PC-9 (cell line): ENCODE measurements at regions of chr4 and their contacts with region 1.

Region 1: DNA sequence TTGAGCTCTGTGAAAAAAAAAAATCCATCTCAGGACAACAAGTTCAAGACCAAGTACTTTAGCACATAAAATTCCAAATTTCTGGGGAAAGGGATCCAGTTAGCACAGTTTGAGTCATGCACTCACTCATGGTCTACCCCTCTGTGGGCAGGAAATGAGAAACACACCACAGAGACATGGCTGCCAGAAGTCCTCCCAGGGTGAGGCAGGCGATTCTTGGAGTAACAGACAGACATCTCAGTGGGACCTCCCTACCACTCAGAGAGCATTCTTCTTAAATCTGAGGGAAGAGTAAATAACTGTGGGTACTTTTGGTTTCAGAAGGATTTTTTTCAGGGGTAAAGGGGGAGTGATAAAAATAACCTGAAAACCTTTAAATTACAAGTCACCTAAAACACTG is 14.1 kb downstream of the CXCL1 start:
- DNase-seq: no peak
- H3K4me3 ChIP-seq: no peak overlapping the region
- H3K27ac ChIP-seq: no peak overlapping the region
- H3K4me1 ChIP-seq: no peaks in the 10 kb centered on the region
- H3K27me3 ChIP-seq: no peaks in the 10 kb centered on the region
- CTCF ChIP-seq: no peak

Region 2: GRCh38 chr4:73687394-73687793 is 195.9 kb before region 1 on chr4:
- CTCF ChIA-PET with region 1: interaction called, 13 read pairs
- POLR2A ChIA-PET with region 1: no interaction called
- intact Hi-C with region 1: no loop called
- DNase-seq: no peak
- H3K4me3 ChIP-seq: no peak overlapping the region
- H3K27ac ChIP-seq: no peak overlapping the region
- H3K4me1 ChIP-seq: no peaks in the 10 kb centered on the region; the same call in 1 of the 2 replicates
- H3K27me3 ChIP-seq: no peaks in the 10 kb centered on the region
- CTCF ChIP-seq: no peak

Region 3: DNA sequence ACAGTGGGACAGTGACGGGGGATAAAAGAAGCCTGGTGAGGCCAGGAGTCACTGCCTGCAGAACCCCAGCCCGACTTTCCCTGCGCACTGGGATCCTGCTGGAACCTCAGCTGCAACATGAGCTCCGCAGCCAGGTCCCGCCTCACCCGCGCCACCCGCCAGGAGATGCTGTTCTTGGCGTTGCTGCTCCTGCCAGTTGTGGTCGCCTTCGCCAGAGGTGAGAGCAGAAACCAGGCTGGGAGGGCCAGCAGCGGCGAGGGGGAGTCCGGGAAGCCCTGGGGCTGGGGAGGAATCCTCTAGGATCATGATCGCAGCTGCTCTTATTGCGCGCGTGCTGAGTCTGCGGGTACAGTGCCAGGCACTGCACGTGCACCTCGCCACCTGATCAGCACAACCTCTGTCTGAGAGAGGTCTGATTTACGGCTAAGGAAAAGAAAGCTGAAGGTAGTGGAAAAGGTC is 30.0 kb before region 1 on chr4 and contains the start of gene PF4V1:
- CTCF ChIA-PET with region 1: no interaction called
- POLR2A ChIA-PET with region 1: no interaction called
- intact Hi-C with region 1: no loop called
- DNase-seq: no peak
- H3K4me3 ChIP-seq: no peak within 1 kb of the TSS
- H3K27ac ChIP-seq: no peak within 1 kb of the TSS
- H3K4me1 ChIP-seq: no peaks in the 10 kb centered on the region
- H3K27me3 ChIP-seq: no peaks in the 10 kb centered on the region
- CTCF ChIP-seq: no peak
- total RNA-seq, gene PF4V1: not detected in 2 replicates

Region 4: DNA sequence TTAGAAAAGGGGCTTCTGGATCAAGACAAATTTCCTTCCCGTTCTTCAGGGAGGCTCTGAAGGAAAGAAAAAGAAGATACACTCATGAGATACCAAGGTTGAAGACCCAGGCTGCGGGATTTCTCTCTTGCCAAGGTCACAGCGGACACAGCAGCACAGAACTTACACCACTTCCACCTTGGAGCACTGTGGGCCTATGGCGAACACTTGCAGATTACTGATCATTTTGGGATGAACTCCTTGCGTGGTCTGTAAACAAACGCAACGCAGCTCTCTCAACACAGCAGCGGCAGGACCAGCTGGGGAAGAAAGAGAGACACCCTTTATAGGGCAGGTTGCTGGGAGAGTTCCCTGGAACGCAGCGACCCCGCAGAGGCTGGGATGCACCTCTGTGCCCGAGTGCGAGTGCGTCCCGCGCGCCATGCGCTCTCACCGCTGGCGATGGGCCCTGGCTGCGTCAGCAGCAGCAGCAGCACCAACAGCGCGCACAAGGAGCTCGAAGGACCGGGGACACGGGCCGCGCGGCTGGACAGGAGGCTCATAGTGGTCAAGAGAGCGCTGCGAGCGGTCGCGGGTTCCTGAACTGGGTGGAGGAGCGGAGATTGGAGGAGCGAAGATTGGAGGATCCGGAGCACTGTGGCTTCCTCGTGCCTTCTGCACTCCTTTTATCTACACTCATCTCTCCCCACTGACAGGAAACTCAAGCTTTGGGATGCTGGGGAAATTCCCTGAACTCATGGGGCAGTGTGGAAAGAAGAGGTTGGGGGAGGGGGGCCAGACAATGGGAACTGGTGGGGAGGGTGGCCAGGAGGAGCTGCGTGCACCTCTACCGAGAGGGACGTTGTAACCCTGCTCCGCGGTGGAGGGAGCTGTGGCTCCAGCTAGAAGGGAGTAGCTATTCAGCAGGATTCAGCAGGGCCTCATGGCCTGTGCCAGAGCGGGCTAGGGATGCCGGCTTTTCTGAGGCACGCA is 115.0 kb after region 1 on chr4 and contains the start of gene CXCL5:
- CTCF ChIA-PET with region 1: no interaction called
- POLR2A ChIA-PET with region 1: no interaction called
- intact Hi-C with region 1: no loop called
- DNase-seq: no peak
- H3K4me3 ChIP-seq: no peak within 1 kb of the TSS
- H3K27ac ChIP-seq: no peak within 1 kb of the TSS
- H3K4me1 ChIP-seq: no peaks in the 10 kb centered on the region
- H3K27me3 ChIP-seq: no peaks in the 10 kb centered on the region
- CTCF ChIP-seq: no peak
- total RNA-seq, gene CXCL5: not detected in 2 replicates